Posterior cingulate gyrus (tissue), 11 donors: ENCODE measurements at regions of chr7 and their contacts with region 1.

Region 1: DNA sequence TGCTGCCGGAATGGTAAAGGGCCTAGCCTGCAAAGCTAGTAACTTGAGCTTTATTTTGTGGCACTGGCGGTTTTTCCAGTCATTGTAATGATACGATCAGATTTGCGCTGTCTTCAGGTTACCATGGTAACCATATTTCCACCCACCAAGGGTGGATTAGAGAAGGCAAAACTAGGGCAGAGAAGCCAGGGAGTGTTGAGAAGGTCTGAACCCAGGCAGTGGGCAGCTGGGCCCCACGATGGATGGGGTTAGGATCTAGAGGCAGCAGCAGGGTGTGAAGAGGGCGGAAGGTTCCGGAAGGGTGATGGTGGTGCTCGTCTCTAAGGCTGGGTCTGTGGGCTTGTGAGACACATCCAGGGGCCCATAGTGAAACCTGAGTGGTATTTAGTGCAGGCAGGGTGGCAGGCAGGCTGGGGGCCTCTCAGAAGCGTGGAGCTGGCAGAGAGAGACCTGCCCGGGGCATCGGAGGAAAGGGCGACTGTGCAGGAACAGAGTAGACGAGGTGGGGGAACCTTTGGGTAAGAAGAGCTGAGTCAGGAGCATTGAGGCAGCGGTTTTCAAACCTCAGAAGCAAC is 87.9 kb upstream of the GTF2I start:
- DNase-seq: no peak

Region 2: GRCh38 chr7:74417419-74417971 is 152.1 kb before region 1 on chr7:
- intact Hi-C with region 1: loop called (anchors 1 kb)
- DNase-seq: peak; percentile 47 to 96 (median 74)

Region 3: DNA sequence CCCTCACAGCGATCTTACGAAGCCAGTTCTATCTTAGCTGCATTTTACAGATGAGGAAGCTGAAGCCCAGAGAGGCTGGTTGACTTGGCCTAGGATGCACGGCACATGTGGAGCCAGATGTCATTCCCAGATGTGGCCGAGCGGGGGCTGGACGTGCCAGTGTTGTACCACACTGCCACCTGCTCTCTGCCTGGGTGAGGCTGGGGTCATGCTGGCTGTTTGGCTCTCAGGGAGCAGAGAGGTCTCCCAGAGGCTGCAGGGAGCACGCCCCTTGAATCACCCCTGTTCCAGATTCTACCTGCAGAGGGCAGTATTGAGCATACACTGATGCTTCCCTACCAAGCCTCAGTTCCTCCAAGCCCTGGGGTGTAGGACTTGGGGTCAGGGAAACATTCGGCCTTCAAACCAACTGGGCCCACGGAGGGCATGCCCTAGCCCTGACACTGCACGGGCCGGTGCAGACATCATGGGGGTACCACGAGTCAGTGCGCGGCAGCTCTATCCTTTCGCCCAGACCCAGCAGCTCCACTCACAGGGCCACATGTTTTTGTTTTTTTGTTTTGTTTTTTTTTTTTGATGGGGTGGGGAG is 119.7 kb before region 1 on chr7:
- intact Hi-C with region 1: loop called (anchors 1 kb)
- DNase-seq: peak in 4 of 10 donors; percentile 44 to 64 (median 50)